Activated naive CD4-positive, alpha-beta T cell treated with anti-CD3 and anti-CD28 coated beads, Interleukin-2, amount 10 ng/mL, durations not matched to agents 7 days and 5 days (primary cell): ENCODE measurements at regions of chr9 and their contacts with region 1.

Region 1: DNA sequence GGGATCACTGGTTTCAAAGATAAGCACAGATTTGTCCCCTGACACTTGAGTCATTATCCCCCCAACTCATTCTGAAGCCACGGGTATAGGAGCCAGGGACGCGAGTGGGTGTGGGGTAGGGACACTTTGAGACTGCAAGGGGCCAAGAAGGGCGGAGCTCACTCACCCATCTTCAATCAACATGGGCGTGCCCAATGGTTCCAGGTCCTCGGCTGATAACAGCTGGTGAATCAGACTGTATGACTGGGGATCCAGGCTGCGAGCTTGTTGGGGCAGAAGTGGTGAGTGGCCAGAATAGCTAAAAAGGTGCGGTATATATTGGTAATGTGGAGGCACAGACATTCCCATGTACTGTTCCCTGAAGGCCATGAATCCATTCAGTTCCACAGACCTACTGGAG is 30.7 kb upstream of the NR5A1 start:
- DNase-seq: no peak
- H3K4me3 Mint-ChIP-seq: no peak overlapping the region
- H3K27ac Mint-ChIP-seq: no peak overlapping the region
- H3K4me1 Mint-ChIP-seq: no peaks in the 10 kb centered on the region
- H3K27me3 Mint-ChIP-seq: peaks cover 4% of the 10 kb centered on the region

Region 2: GRCh38 chr9:124415102-124415851 is 122.6 kb before region 1 on chr9 and contains the start of gene PSMB7:
- CTCF ChIA-PET with region 1: interaction called, 92 read pairs
- DNase-seq: peak; percentile 98
- H3K4me3 Mint-ChIP-seq: peak within 1 kb of the TSS; percentile 95
- H3K27ac Mint-ChIP-seq: peak within 1 kb of the TSS; percentile 90
- H3K4me1 Mint-ChIP-seq: peaks cover 33% of the 10 kb centered on the region
- H3K27me3 Mint-ChIP-seq: peaks cover 4% of the 10 kb centered on the region

Region 3: DNA sequence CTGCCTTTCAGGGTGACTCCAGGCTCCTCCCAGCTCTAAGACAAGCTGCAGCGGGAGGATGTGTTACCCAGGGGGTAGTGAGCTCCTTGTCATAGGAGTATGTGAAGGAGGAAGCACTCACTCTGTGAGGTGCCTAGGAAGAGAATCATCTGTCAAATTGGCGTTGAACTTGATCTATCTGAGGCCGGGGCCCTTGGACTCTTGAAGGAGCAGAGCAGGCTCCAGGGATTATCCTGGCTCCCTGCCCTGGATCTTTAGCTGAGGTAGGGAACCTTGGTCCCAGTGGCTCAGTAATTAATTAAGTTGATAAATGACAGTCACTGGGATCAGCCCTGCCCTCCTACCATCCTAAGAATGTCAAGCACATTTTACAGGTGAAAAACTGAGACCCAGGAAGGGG is 72.2 kb before region 1 on chr9:
- CTCF ChIA-PET with region 1: no interaction called
- DNase-seq: no peak
- H3K4me3 Mint-ChIP-seq: no peak overlapping the region
- H3K27ac Mint-ChIP-seq: no peak overlapping the region
- H3K4me1 Mint-ChIP-seq: no peaks in the 10 kb centered on the region
- H3K27me3 Mint-ChIP-seq: peaks cover 27% of the 10 kb centered on the region

Region 4: GRCh38 chr9:124493794-124494479 is 44.0 kb before region 1 on chr9:
- CTCF ChIA-PET with region 1: no interaction called
- DNase-seq: no peak
- H3K4me3 Mint-ChIP-seq: no peak overlapping the region
- H3K27ac Mint-ChIP-seq: no peak overlapping the region
- H3K4me1 Mint-ChIP-seq: peaks cover 16% of the 10 kb centered on the region
- H3K27me3 Mint-ChIP-seq: peaks cover 3% of the 10 kb centered on the region

Region 5: GRCh38 chr9:124527781-124528180 is 10.1 kb before region 1 on chr9:
- CTCF ChIA-PET with region 1: interaction called, 14 read pairs
- DNase-seq: no peak
- H3K4me3 Mint-ChIP-seq: no peak overlapping the region
- H3K27ac Mint-ChIP-seq: no peak overlapping the region
- H3K4me1 Mint-ChIP-seq: no peaks in the 10 kb centered on the region
- H3K27me3 Mint-ChIP-seq: peaks cover 10% of the 10 kb centered on the region

Region 6: DNA sequence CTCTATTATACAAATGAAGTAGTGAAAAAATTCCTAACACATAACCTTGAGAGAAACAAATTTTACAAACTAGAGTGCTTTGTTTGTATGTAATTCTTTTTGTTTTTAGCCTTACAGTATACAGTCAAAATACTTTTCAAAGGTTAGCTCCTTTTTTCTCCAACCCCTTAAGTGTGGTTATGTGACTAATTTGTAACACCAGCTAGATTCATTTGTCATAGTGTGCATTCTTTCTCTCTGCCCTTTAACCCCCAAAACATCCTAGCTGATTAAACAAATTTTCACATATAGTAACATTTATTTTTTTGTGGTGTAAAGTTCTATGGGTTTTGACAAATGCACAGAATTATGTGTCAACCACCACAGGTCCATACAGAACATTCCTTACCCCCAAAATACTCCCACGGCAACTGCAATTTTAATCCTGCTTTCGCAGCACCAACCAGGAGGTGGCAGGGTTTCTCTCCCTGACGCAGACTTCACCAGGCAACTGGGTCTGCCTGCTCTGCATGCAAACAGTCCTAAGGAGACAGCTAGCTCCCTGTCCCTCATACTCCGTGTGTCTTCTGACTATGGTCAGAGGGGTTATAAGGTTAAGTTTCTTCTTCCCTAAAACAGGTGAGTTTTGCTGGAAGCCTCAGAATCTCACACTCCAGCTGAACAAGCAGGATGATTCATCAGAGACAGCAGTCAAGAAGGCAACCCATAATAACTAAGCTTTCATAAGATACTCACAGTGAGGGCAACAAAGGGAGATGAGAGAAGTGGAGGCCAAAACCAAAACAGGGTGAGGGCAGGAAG is 13.7 kb after region 1 on chr9:
- CTCF ChIA-PET with region 1: interaction called, 18 read pairs
- DNase-seq: peak; percentile 52
- H3K4me3 Mint-ChIP-seq: no peak overlapping the region
- H3K27ac Mint-ChIP-seq: no peak overlapping the region
- H3K4me1 Mint-ChIP-seq: peaks cover 7% of the 10 kb centered on the region
- H3K27me3 Mint-ChIP-seq: peaks cover 5% of the 10 kb centered on the region